ENCODE measurements at regions of chr18 and their contacts with region 1.

Region 1: DNA sequence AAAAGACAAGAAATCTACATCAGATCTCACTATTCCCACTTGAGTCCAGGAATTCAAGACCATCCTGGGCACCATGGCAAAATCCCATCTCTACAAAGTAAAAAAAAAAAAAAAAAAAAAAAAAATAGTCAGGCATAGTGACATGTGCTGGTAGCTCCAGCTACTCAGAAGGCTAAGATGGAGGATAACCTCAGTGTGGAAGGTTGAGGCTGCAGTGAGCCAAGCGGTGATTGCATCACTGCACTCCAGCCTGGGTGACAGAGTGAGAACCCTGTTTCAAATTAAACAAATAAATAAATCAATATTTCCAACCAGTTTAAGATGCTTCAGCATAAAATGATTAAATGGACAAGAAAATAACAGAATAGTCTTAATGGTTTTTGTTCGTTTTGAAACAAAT is 197.4 kb downstream of the DSEL start:
- DNase-seq: no peak
- H3K27ac ChIP-seq: no peak overlapping the region
- CTCF ChIP-seq: no peak

Region 2: DNA sequence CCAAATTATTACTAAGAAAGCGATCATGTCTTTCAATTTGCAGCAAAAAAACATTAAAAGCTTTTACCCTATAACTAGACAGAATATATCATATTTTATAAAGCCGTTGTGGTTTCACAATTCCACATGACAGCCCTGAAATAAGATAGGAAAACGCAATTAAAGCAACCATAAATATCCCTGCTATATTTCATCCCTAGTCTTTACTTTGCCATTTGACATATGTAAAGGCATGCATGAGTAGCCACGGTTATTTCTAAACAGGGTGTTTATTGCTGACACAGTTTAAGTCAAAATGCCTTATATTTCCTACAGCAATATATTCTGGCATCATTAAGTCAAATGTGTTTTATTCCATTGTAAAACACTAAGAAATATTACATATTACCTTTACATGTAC is 42.5 kb before region 1 on chr18:
- CTCF ChIA-PET with region 1: no interaction called
- POLR2A ChIA-PET with region 1: interaction called, 10 read pairs
- DNase-seq: no peak
- H3K27ac ChIP-seq: no peak overlapping the region
- CTCF ChIP-seq: no peak